H1 (cell line): ENCODE measurements at regions of chr5 and their contacts with region 1.

Region 1: DNA sequence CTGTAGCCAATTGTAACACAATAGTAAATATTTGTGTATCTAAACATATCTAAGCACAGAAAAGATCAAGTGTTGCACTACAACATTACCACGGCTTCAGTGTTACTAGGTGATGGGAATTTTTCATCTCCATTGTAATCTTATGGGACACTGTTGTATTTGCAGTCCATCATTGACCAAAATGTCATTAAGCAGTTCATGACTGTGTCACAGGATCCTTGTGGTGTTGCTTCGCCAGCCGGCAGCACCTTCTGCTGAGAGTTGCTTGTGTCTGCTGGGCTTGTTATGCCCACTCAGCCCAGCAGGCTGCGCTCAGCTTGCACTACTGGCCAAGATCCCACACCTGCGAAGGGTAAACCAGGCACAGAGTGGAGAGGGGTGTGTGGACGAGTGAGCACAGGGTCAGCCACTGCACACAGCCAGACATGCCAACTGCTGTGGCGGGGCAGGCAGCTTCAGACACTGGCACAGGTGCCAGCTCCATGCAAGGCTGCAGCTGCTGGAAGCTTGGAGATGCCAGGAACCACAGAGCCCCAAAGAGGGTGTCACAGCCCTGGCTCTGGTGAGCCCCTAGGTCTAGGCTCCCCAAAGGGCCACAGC is 273.7 kb downstream of the CETN3 start:
- DNase-seq: peak; percentile 43 to 79
- H3K4me3 ChIP-seq: no peak overlapping the region
- H3K27ac ChIP-seq: no peak overlapping the region
- H3K4me1 ChIP-seq: peaks cover 0 to 2% (median 1%) of the 10 kb centered on the region in 4 experiments; a peak in 3 of 7 replicates
- H3K27me3 ChIP-seq: no peaks in the 10 kb centered on the region
- CTCF ChIP-seq: peak; percentile 90 to 98 (median 94)
- EP300 ChIP-seq: no peak
- POLR2A ChIP-seq: no peak
- RAD21 ChIP-seq: peak; percentile 95 to 98

Region 2: GRCh38 chr5:90119531-90120006 is 16.3 kb before region 1 on chr5:
- CTCF ChIA-PET with region 1: interaction called, 10 read pairs
- POLR2A ChIA-PET with region 1: no interaction called
- DNase-seq: no peak
- H3K4me3 ChIP-seq: no peak overlapping the region
- H3K27ac ChIP-seq: no peak overlapping the region
- H3K4me1 ChIP-seq: no peaks in the 10 kb centered on the region
- H3K27me3 ChIP-seq: no peaks in the 10 kb centered on the region
- CTCF ChIP-seq: no peak
- EP300 ChIP-seq: no peak
- POLR2A ChIP-seq: no peak
- RAD21 ChIP-seq: no peak

Region 3: GRCh38 chr5:90161414-90161813 is 25.5 kb after region 1 on chr5:
- CTCF ChIA-PET with region 1: interaction called, 31 read pairs
- POLR2A ChIA-PET with region 1: no interaction called
- DNase-seq: peak; percentile 31 to 52
- H3K4me3 ChIP-seq: no peak overlapping the region
- H3K27ac ChIP-seq: no peak overlapping the region
- H3K4me1 ChIP-seq: peaks cover 0 to 5% (median 2%) of the 10 kb centered on the region in 4 experiments; a peak in 3 of 7 replicates
- H3K27me3 ChIP-seq: 0 out of 7 replicates have a peak, but pooled peaks cover 0 to 2% (median 0%) of the 10 kb centered on the region in 4 experiments
- CTCF ChIP-seq: peak; percentile 51 to 76 (median 71)
- EP300 ChIP-seq: no peak
- POLR2A ChIP-seq: no peak
- RAD21 ChIP-seq: peak; percentile 81 to 88

Region 4: GRCh38 chr5:90264689-90265544 is 129.0 kb after region 1 on chr5:
- CTCF ChIA-PET with region 1: interaction called, 41 read pairs
- POLR2A ChIA-PET with region 1: no interaction called
- DNase-seq: peak; percentile 25 to 61
- H3K4me3 ChIP-seq: no peak overlapping the region
- H3K27ac ChIP-seq: no peak overlapping the region
- H3K4me1 ChIP-seq: peaks cover 0 to 4% (median 0%) of the 10 kb centered on the region in 4 experiments; a peak in 1 of 7 replicates
- H3K27me3 ChIP-seq: no peaks in the 10 kb centered on the region
- CTCF ChIP-seq: peak; percentile 71 to 89 (median 87)
- EP300 ChIP-seq: no peak
- POLR2A ChIP-seq: no peak
- RAD21 ChIP-seq: peak; percentile 99

Region 5: GRCh38 chr5:90356622-90357021 is 220.7 kb after region 1 on chr5:
- CTCF ChIA-PET with region 1: no interaction called
- POLR2A ChIA-PET with region 1: no interaction called
- DNase-seq: no peak
- H3K4me3 ChIP-seq: no peak overlapping the region
- H3K27ac ChIP-seq: no peak overlapping the region
- H3K4me1 ChIP-seq: peaks cover 0 to 2% (median under 1%) of the 10 kb centered on the region in 4 experiments; a peak in 1 of 7 replicates
- H3K27me3 ChIP-seq: no peaks in the 10 kb centered on the region
- CTCF ChIP-seq: no peak
- EP300 ChIP-seq: no peak
- POLR2A ChIP-seq: no peak
- RAD21 ChIP-seq: no peak

Region 6: DNA sequence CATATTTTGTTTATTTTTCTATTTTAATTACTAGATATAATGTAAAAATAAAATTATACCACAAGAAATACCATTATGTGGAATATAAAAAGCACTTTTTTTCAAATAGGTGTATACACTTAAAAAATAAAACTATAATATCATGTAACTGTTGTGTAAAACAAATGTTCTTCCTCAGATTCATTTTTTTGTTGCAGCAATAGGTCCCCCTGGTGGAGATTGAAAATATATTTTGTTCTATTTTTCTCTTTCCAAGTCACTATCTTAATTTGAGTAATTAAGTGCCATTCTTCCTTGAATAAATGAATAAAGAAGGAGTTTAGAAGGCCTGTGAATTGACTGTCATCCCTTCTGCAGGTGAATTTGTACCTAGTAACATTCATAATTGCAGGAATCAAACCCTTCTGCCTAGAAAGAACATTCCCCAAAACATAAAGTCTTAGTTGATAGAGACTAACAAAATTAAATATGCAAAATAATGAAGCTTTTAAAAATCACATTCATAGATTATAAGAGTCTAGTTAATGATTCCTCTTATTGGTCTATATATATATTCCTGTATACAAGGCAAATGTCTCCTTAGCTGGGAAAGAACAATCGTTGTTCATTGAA is 250.3 kb after region 1 on chr5:
- CTCF ChIA-PET with region 1: interaction called, 19 read pairs
- POLR2A ChIA-PET with region 1: no interaction called
- DNase-seq: no peak
- H3K4me3 ChIP-seq: no peak overlapping the region
- H3K27ac ChIP-seq: no peak overlapping the region
- H3K4me1 ChIP-seq: no peaks in the 10 kb centered on the region
- H3K27me3 ChIP-seq: no peaks in the 10 kb centered on the region
- CTCF ChIP-seq: peak in 2 of 3 experiments; percentile 19 to 25; a peak in 2 of 4 replicates
- EP300 ChIP-seq: no peak
- POLR2A ChIP-seq: no peak
- RAD21 ChIP-seq: peak in 1 of 2 experiments; percentile 65